Transverse colon (tissue), 4 donors: ENCODE measurements at regions of chr12 and their contacts with region 1.

Region 1: DNA sequence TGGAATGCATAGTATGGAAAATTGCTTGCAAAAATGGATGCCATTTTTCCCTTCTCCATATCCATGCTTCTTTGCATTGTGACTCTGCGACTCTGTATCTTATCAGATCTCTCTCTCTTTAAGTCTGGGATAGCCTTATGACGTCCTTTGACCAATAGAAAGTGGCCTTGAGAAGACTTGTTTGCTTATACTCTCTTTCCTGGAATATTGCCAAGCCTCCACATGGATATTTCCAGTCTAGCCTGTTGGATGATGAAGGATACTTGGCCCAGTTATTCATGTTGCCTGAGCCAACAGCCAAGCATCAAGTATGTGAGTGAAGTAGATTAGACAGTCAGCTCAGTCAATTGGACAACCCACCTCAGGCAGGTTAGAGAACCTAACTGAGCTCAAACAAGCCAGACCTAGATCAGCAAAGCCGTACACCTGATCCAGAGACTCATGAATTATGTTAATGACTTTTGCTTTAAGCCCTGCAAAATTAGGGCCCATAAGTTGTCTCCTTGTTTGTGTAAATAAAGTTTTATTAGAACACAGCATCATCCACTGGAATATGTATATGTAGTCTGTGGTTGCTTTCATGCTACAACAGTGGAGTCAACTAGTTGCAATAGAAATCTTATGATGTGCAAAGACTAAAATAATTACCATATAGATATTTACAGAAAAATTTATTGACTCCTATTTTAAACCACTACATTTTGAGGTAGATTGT is 864.4 kb upstream of the MGAT4C start:
- DNase-seq: no peak
- H3K4me3 ChIP-seq: no peak overlapping the region
- H3K27ac ChIP-seq: no peak overlapping the region
- H3K4me1 ChIP-seq: no peaks in the 10 kb centered on the region
- H3K27me3 ChIP-seq: no peaks in the 10 kb centered on the region
- CTCF ChIP-seq: no peak
- EP300 ChIP-seq: no peak
- POLR2A ChIP-seq: no peak

Region 2: GRCh38 chr12:86513226-86513625 is 607.3 kb before region 1 on chr12:
- in situ Hi-C with region 1: no loop called
- intact Hi-C with region 1: no loop called
- DNase-seq: no peak
- H3K4me3 ChIP-seq: no peak overlapping the region
- H3K27ac ChIP-seq: no peak overlapping the region
- H3K4me1 ChIP-seq: no peaks in the 10 kb centered on the region
- H3K27me3 ChIP-seq: no peaks in the 10 kb centered on the region
- CTCF ChIP-seq: no peak
- EP300 ChIP-seq: no peak
- POLR2A ChIP-seq: no peak

Region 3: DNA sequence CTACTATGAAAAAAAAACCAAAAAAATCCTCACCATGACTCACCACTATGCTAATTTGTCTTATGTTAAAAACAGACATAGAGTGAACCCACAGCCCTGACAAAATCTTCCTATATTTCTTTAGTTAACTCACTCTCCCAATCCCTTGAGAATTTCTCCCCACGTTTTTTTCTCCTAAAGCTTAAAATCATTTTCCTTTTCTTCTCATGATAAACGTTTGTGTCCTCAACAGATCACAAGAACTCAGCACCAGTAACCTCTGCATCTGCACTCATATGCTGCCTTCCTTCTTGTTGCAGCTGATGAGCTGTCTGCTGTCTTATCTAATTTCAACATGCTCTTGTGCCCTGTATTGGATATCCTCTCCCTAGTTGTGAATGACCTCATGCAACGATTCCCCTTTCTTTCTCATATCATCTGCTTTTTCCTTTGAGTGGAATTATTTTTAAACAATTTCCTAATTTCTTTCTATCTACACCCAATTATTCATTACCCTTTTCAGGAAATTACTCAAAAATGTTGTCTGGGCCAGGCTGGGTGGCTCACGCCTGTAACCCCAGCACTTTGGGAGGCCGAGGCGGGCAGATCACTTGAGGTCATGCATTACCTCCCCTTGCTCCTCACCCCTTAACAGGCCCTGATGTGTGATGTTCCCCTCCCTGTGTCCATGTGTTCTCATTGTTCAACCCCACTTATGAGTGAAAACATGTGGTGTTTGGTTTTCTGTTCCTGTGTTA is 436.8 kb before region 1 on chr12:
- in situ Hi-C with region 1: no loop called
- intact Hi-C with region 1: no loop called
- DNase-seq: no peak
- H3K4me3 ChIP-seq: no peak overlapping the region
- H3K27ac ChIP-seq: no peak overlapping the region
- H3K4me1 ChIP-seq: no peaks in the 10 kb centered on the region
- H3K27me3 ChIP-seq: no peaks in the 10 kb centered on the region
- CTCF ChIP-seq: no peak
- EP300 ChIP-seq: no peak
- POLR2A ChIP-seq: no peak

Region 4: GRCh38 chr12:87082756-87083155 is 37.8 kb before region 1 on chr12:
- in situ Hi-C with region 1: no loop called
- intact Hi-C with region 1: loop called (anchors 1 kb)
- DNase-seq: no peak
- H3K4me3 ChIP-seq: no peak overlapping the region
- H3K27ac ChIP-seq: no peak overlapping the region
- H3K4me1 ChIP-seq: no peaks in the 10 kb centered on the region
- H3K27me3 ChIP-seq: no peaks in the 10 kb centered on the region
- CTCF ChIP-seq: no peak
- EP300 ChIP-seq: no peak
- POLR2A ChIP-seq: no peak